CD4-positive, alpha-beta T cell (primary cell): ENCODE measurements at regions of chr4 and their contacts with region 1.

Region 1: DNA sequence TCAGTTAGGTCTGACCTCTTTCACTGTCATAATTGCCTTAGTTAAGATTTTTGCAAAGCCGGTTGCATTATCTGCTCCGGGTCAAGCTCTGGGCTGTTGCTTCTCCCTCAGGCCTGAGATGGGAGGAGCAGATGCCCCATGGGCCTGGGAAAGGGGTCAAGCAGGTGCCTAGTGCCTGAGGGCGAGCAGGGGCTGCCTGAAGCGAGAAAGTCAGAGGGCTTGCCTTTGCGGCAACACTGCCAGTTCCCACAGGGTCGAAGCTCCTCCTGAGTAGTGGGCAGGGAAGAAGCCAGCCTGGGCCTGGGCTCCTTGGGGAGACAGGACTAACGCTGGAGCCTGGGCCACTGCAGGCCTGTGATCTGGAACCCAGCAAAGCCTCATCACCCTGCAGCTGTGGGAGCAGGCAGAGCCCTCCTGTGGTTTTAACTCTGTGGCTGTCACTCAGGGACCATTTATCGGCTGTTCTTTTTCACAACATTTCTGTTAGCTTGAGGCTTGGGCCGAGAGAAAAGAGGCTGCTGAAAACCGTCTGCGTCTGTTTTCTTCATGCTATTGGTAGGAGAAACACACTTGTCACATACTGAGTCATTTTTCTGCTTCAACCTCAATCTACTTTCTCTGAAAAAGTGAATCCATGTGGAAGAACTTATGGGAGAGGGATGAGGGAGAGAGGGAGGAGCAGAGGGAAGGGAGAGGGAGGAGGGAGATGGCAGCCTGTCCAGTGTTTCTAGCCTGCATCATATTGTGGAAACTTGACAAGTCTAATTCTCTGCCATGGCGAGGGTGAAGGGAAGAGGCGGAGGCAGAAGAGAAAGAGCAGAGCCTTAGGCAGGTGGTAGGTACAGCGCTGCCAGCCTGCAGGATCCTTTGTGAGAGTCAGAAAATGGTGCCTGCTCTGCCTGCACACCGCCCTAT is 68.4 kb downstream of the RHOH start:
- DNase-seq: peak in 10 of 14 experiments; percentile 27 to 81 (median 49)
- ATAC-seq: peak; percentile 78
- H3K4me3 ChIP-seq: peak overlapping the region; percentile 28
- H3K4me3 Mint-ChIP-seq: peak overlapping the region; percentile 83
- H3K27ac ChIP-seq: peak overlapping the region; percentile 46 to 52
- H3K27ac Mint-ChIP-seq: peak overlapping the region; percentile 99
- H3K4me1 ChIP-seq: peaks cover 22% of the 10 kb centered on the region
- H3K4me1 Mint-ChIP-seq: peaks cover 70% of the 10 kb centered on the region
- H3K27me3 ChIP-seq: no peaks in the 10 kb centered on the region
- H3K27me3 Mint-ChIP-seq: no peaks in the 10 kb centered on the region
- CTCF ChIP-seq: no peak

Region 2: DNA sequence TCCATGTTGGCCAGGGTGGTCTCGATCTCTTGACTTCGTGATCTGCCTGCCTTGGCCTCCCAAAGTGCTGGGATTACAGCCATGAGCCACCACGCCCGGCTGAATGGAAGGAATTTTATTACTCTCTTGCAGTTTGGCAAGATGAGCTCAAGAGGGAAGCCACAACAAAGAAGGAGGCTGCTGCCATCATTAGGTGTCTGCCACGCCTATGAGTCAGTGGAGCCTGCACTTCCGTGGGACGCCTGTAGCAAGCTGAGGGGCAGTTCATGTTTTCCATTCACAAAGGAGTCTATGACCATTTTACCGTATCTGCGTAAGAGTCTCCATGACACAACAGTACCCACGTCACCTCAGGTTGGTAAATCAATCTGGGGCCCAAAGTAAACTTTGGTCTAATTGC is 18.7 kb after region 1 on chr4:
- CTCF ChIA-PET with region 1: interaction called, 4 read pairs
- POLR2A ChIA-PET with region 1: interaction called, 13 read pairs
- intact Hi-C with region 1: no loop called
- DNase-seq: peak; percentile 58 to 93 (median 78)
- ATAC-seq: peak; percentile 97
- H3K4me3 ChIP-seq: no peak overlapping the region
- H3K4me3 Mint-ChIP-seq: peak overlapping the region; percentile 82
- H3K27ac ChIP-seq: peak overlapping the region; percentile 33 to 60
- H3K27ac Mint-ChIP-seq: peak overlapping the region; percentile 85
- H3K4me1 ChIP-seq: peaks cover 47% of the 10 kb centered on the region
- H3K4me1 Mint-ChIP-seq: peaks cover 76% of the 10 kb centered on the region
- H3K27me3 ChIP-seq: no peaks in the 10 kb centered on the region
- H3K27me3 Mint-ChIP-seq: no peaks in the 10 kb centered on the region
- CTCF ChIP-seq: peak; percentile 49

Region 3: GRCh38 chr4:40289366-40290188 is 24.3 kb after region 1 on chr4:
- CTCF ChIA-PET with region 1: no interaction called
- POLR2A ChIA-PET with region 1: interaction called, 13 read pairs
- intact Hi-C with region 1: loop called in 1 of 2 experiments (anchors 2 kb)
- DNase-seq: peak in 5 of 14 experiments; percentile 31 to 70 (median 59)
- ATAC-seq: peak; percentile 88
- H3K4me3 ChIP-seq: peak overlapping the region; percentile 8
- H3K4me3 Mint-ChIP-seq: peak overlapping the region; percentile 50
- H3K27ac ChIP-seq: peak overlapping the region; percentile 39 to 62
- H3K27ac Mint-ChIP-seq: peak overlapping the region; percentile 85
- H3K4me1 ChIP-seq: peaks cover 49% of the 10 kb centered on the region
- H3K4me1 Mint-ChIP-seq: peaks cover 74% of the 10 kb centered on the region
- H3K27me3 ChIP-seq: no peaks in the 10 kb centered on the region
- H3K27me3 Mint-ChIP-seq: no peaks in the 10 kb centered on the region
- CTCF ChIP-seq: no peak

Region 4: DNA sequence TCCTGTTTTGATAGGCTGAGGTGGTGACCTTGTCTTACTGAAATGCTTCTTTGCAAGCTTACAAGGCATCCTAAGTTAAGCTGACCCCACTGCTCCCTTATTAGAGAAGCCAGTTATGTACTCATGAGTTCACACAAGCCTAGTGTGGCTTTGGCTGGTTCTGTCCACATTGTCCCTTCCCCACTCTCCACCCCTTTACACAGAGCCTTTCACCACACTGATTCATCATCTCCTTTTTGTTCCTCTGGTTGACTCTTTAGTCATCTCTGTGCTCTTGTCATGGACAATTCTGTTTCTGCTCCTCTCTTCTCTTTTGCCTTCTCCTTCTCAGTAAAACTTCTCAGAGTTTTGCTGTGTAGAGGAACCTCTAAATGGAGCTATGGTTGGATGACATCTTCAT is 74.8 kb after region 1 on chr4:
- CTCF ChIA-PET with region 1: no interaction called
- POLR2A ChIA-PET with region 1: no interaction called
- intact Hi-C with region 1: no loop called
- DNase-seq: no peak
- ATAC-seq: no peak
- H3K4me3 ChIP-seq: no peak overlapping the region
- H3K4me3 Mint-ChIP-seq: no peak overlapping the region
- H3K27ac ChIP-seq: no peak overlapping the region
- H3K27ac Mint-ChIP-seq: no peak overlapping the region
- H3K4me1 ChIP-seq: no peaks in the 10 kb centered on the region
- H3K4me1 Mint-ChIP-seq: no peaks in the 10 kb centered on the region
- H3K27me3 ChIP-seq: no peaks in the 10 kb centered on the region
- H3K27me3 Mint-ChIP-seq: peaks cover 4% of the 10 kb centered on the region
- CTCF ChIP-seq: no peak